ENCODE measurements at regions of chr12 and their contacts with region 1.

Region 1: DNA sequence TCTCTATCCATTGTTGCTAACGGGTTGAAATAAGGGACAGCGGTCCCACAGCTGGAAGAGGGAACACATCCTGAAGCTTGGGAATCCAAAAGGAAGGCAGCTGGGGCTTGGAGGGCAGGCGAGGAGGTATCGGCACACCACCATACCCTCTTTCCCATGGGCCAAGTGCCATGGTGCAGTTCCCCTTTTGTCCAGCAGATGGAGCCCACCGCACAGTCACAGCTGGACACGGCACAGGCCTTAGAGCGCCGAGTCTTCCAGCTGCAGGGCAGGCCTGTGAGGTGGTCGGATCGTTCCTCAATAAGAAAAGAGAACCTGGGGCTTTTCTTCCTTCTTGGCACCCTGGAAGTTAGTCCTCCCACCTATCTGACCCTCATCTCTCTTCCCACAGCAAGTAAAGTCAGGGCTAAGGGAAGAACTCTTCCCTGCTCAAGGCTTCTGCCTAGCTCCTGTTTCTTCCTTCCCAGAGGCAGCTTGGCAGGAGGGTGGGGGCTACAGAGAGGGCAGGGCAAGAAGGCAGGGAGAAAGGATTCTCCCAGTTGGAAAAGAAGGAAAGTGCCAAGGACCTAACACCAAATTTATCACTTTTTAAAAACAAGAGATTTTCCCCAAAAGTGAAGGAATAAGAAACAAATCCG is 8.6 kb downstream of the PPP1R1A start:
- DNase-seq: peak; percentile 78 to 90 (median 81)
- ATAC-seq: peak; percentile 90 to 95 (median 92)
- H3K4me3 ChIP-seq: no peak overlapping the region
- H3K27ac ChIP-seq: peak overlapping the region in 1 of 12 donors; percentile 20
- H3K4me1 ChIP-seq: peaks cover 0 to 9% (median 0%) of the 10 kb centered on the region in 12 donors
- H3K27me3 ChIP-seq: peaks cover 0 to 8% (median 0%) of the 10 kb centered on the region in 9 donors
- CTCF ChIP-seq: peak; percentile 98 to 100 (median 99)
- POLR2A ChIP-seq: no peak

Region 2: DNA sequence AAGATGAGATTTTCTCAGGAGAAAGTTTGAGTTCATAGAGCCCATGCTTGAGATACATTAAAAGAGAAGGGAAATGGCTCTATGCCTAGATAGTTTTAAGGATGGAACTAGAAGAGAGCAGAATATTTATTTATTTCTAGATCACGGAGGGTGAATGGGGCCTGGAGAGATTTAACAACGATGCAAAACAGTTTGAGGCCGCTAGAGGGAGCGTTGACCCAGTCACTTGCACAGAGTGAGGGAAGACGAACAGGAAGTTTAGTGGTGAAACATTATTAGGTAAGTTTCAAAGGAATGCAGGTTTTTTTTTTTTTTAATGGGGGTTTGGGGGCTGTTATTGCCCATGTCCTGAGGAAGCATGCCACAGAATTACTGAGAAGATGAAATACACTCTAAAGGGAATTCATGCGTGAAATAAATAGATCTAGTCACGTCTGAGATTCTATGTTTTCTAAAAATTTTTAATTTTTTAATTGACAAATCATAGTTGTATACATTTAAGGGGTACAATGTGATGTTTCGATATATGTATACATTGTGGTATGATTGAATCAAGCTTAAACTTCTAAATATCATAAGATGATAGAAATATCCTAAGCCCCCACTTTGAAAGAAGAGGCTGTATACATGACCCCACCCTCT is 23.5 kb after region 1 on chr12:
- intact Hi-C with region 1: loop called in 1 of 10 experiments (anchors 2 kb)
- DNase-seq: peak in 2 of 5 donors; percentile 40 to 53
- ATAC-seq: peak in 3 of 4 donors; percentile 65 to 82 (median 79)
- H3K4me3 ChIP-seq: no peak overlapping the region
- H3K27ac ChIP-seq: no peak overlapping the region
- H3K4me1 ChIP-seq: no peaks in the 10 kb centered on the region
- H3K27me3 ChIP-seq: no peaks in the 10 kb centered on the region
- CTCF ChIP-seq: peak; percentile 51 to 82 (median 68)
- POLR2A ChIP-seq: no peak